Activated T-helper 1 cell treated with anti-CD3 and anti-CD28 coated beads, Interleukin-12 subunit alpha, Interleukin-12 subunit beta, Interleukin-2, Interleukin-4 antibody, amounts not matched to agents 30 ng/mL and 10 ng/mL and 1 ng/mL, durations not matched to agents 14 hours and 24 hours and 36 hours (primary cell): ENCODE measurements at regions of chr22 and their contacts with region 1.

Region 1: DNA sequence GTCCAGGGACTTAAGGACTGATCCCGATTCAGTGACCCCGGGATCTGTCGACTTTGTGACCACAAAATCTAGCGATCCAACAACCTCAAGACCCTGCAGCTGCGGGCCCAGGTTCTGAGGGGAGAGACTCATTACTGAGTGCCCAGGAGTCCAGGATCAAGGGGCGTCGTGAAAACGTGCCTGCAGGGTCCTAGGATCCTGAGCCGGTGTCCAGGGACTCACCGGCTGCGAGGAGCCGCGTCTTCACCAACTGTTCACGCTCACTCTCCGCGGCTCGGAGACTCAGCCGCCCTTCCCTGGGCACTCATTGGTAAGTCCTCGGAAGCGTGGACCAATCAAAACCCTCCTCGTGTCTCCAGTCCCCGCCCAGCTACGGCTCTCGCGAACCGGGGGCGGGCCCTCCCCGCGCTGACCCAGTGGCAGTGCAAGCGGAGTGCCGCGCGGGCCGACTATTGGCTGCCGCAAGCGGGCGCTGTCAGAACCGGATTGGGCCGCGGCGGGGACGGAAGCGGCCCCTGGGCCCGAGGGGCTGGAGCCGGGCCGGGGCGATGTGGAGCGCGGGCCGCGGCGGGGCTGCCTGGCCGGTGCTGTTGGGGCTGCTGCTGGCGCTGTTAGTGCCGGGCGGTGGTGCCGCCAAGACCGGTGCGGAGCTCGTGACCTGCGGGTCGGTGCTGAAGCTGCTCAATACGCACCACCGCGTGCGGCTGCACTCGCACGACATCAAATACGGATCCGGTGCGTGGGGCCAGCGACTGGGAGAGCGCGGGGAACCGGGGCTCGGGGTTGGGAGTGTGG is at the start of gene SDF2L1:
- DNase-seq: peak; percentile 99
- H3K4me3 Mint-ChIP-seq: peak within 1 kb of the TSS; percentile 90
- H3K27ac Mint-ChIP-seq: peak within 1 kb of the TSS; percentile 94
- H3K4me1 Mint-ChIP-seq: peaks cover 39% of the 10 kb centered on the region
- H3K27me3 Mint-ChIP-seq: peaks cover 10% of the 10 kb centered on the region
- total RNA-seq, gene SDF2L1: 98.8 and 100 TPM in 2 replicates

Region 2: GRCh38 chr22:21567456-21568346 is 74.3 kb before region 1 on chr22 and contains the start of gene UBE2L3:
- intact Hi-C with region 1: loop called (anchors 2 kb)
- DNase-seq: peak; percentile 80
- H3K4me3 Mint-ChIP-seq: peak within 1 kb of the TSS; percentile 96
- H3K27ac Mint-ChIP-seq: peak within 1 kb of the TSS; percentile 95
- H3K4me1 Mint-ChIP-seq: peaks cover 40% of the 10 kb centered on the region
- H3K27me3 Mint-ChIP-seq: no peaks in the 10 kb centered on the region
- total RNA-seq, gene UBE2L3: 58.3 and 62.4 TPM in 2 replicates

Region 3: DNA sequence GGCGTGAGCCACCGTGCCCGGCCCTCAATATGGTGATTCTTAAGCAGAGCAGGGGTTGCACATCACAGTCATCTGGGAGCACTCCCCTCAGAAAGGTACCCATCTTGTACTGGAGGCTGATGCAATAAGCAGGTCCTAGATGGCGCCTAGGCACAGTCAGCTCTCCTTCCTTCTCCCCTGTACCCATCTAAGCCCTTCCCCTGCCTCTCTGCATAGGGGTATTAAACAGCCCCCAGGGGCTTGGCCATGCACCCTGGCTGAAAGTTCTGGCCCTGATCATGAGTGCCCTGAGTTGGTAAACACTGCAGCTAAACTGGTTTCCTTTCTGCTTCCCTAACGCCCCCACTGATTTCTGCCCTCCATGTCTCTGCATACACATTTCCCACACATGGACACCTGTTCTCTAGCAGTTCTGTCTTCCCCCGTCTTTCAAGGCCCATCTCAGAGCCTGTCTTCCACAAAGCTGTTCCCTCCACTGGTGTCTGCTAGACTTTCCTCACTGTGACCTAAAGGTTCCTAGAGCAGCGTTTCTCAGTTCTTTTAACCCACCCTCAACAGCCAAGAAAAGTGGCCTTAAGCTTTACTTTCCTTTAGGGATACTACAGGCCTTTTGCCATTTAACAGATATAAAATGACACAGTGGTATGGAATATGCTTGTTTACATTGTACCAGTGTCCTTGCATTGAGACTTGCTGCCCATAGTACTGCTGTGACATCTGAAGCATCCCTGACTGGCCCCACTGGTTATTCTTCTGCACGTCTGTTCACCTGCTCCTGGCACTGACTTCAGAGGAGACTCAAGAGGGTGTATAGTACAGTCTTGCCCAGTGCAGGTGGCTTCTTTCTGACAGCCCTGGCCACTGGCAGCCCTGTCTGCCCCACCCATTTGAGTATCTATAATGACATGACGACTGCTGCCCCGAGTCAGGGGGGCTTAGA is 58.9 kb before region 1 on chr22:
- intact Hi-C with region 1: no loop called
- DNase-seq: no peak
- H3K4me3 Mint-ChIP-seq: no peak overlapping the region
- H3K27ac Mint-ChIP-seq: peak overlapping the region; percentile 38
- H3K4me1 Mint-ChIP-seq: peaks cover 26% of the 10 kb centered on the region
- H3K27me3 Mint-ChIP-seq: no peaks in the 10 kb centered on the region

Region 4: GRCh38 chr22:21629262-21630149 is 12.5 kb before region 1 on chr22 and contains the start of gene YDJC:
- intact Hi-C with region 1: loop called (anchors 1 kb)
- DNase-seq: peak; percentile 93
- H3K4me3 Mint-ChIP-seq: peak within 1 kb of the TSS; percentile 91
- H3K27ac Mint-ChIP-seq: peak within 1 kb of the TSS; percentile 92
- H3K4me1 Mint-ChIP-seq: peaks cover 28% of the 10 kb centered on the region
- H3K27me3 Mint-ChIP-seq: no peaks in the 10 kb centered on the region
- total RNA-seq, gene YDJC: 51.7 and 51.8 TPM in 2 replicates

Region 5: GRCh38 chr22:21652010-21652546 is 10.1 kb after region 1 on chr22:
- intact Hi-C with region 1: loop called (anchors 1 kb)
- DNase-seq: peak; percentile 88
- H3K4me3 Mint-ChIP-seq: peak overlapping the region; percentile 88
- H3K27ac Mint-ChIP-seq: peak overlapping the region; percentile 80
- H3K4me1 Mint-ChIP-seq: peaks cover 34% of the 10 kb centered on the region
- H3K27me3 Mint-ChIP-seq: no peaks in the 10 kb centered on the region

Region 6: DNA sequence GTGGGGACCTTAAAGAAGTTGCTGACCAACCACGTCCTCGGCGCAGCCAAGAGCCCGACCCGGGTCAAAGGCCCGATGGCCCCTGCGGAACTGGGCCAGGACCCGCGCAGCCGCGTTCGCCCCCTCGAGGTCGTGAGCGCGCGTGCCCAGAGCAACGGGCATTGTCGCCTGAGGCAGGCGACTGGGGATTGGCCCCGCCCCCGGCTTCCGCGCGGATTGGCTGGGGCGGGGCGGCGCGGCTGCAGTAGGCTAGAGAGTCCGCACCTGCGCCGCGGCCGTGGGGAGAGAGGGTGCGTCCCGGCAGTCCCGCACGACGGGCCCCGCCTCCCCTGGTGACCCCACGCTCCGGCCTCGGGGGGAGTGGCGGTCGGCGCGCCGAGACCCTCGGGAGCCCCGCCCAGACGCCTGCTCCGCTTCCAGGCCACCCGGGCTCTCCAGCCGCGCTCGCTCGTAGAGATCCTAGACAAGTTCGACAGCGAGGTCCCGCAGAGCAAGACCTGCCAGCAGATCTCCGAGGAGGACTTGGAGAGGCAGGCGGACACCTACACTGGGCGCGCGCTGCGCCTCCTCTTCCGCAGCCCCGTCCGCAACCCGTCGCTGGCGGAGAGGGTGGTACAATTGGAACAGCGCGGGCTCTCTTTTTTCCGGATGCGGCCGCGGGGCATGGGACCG is 15.5 kb after region 1 on chr22:
- intact Hi-C with region 1: loop called (anchors 1 kb)
- DNase-seq: peak; percentile 82
- H3K4me3 Mint-ChIP-seq: peak overlapping the region; percentile 88
- H3K27ac Mint-ChIP-seq: peak overlapping the region; percentile 78
- H3K4me1 Mint-ChIP-seq: peaks cover 18% of the 10 kb centered on the region
- H3K27me3 Mint-ChIP-seq: no peaks in the 10 kb centered on the region

Region 7: DNA sequence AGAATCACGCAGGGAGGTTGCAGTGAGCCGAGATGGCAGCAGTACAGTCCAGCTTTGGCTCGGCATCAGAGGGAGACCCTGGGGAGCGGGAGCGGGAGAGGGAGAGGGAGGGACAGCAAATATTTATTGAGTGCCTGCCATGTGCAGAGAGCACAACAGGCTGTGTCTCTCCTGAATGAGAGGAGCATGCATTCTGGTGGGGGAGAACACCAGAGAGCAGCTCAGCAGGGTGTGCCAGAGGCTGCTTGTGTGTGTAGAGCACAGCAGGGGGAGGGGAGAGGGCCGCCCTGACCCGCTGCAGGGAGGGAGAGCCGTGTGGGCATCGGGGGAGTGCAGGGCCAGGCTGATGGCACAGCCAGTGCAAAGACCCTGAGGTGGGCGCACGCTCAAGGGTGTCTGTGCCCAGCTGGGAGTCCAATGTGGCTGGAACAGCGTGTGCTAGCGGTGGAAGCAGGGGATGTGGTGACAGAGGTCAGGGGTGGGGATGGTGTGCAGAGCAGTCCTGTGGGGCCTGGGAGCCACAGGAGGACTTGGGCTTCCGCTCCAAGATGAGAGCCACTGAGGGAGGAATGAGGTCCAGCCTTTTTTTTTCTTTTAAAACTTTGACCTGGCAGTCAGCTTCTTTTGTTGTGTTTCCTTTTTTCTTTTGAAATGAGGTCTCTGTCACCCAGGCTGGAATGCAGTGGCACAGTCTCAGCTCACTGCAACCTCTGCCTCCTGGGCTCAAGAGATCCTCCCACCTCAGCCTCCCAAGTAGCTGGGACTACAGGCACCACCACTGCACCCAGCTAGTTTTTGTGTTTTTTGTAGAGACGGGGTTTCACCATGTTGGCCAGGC is 35.8 kb after region 1 on chr22:
- intact Hi-C with region 1: no loop called
- DNase-seq: no peak
- H3K4me3 Mint-ChIP-seq: no peak overlapping the region
- H3K27ac Mint-ChIP-seq: no peak overlapping the region
- H3K4me1 Mint-ChIP-seq: no peaks in the 10 kb centered on the region
- H3K27me3 Mint-ChIP-seq: no peaks in the 10 kb centered on the region